GM12878 (cell line): ENCODE measurements at regions of chr4 and their contacts with region 1.

Region 1: GRCh38 chr4:22444813-22445212 is 71.1 kb downstream of the ADGRA3 start:
- DNase-seq: no peak
- ATAC-seq: no peak; the same call in 1 of the 3 replicates
- H3K4me3 ChIP-seq: no peak overlapping the region
- H3K27ac ChIP-seq: no peak overlapping the region
- H3K4me1 ChIP-seq: no peaks in the 10 kb centered on the region
- H3K27me3 ChIP-seq: no peaks in the 10 kb centered on the region
- CTCF ChIP-seq: no peak
- EP300 ChIP-seq: no peak
- POLR2A ChIP-seq: no peak
- RAD21 ChIP-seq: no peak

Region 2: DNA sequence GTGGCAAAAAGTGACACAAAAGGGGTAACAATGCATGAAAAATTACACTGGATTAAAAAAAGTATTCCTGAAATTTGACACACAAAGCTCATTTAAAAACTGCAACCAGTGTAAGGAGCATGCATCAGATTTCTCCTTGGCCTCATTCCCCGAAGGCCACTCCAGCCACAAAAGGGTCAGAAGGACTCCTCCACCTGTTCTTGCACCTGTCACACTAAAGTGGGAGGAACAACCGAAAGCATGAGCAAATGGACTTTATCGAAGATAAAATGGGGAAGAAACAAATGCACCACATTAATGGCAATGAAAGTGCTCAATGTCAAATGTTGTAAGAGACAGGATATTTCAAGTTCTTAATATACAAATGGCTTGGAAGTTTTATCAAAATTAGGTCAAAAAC is 17.1 kb before region 1 on chr4:
- CTCF ChIA-PET with region 1: interaction called, 5 read pairs
- POLR2A ChIA-PET with region 1: interaction called, 4 read pairs
- RAD21 ChIA-PET with region 1: interaction called, 4 read pairs
- SMC1A ChIA-PET with region 1: interaction called, 32 read pairs
- in situ Hi-C with region 1: no loop called
- intact Hi-C with region 1: no loop called
- DNase-seq: no peak
- ATAC-seq: peak; percentile 55; the same call in 2 of the 3 replicates
- H3K4me3 ChIP-seq: no peak overlapping the region
- H3K27ac ChIP-seq: no peak overlapping the region
- H3K4me1 ChIP-seq: no peaks in the 10 kb centered on the region
- H3K27me3 ChIP-seq: no peaks in the 10 kb centered on the region
- CTCF ChIP-seq: no peak
- EP300 ChIP-seq: no peak
- POLR2A ChIP-seq: no peak
- RAD21 ChIP-seq: no peak

Region 3: GRCh38 chr4:22454955-22455354 is 10.1 kb after region 1 on chr4:
- CTCF ChIA-PET with region 1: interaction called, 16 read pairs
- POLR2A ChIA-PET with region 1: interaction called, 5 read pairs
- RAD21 ChIA-PET with region 1: interaction called, 18 read pairs
- SMC1A ChIA-PET with region 1: interaction called, 19 read pairs
- in situ Hi-C with region 1: no loop called
- intact Hi-C with region 1: no loop called
- DNase-seq: no peak
- ATAC-seq: peak; percentile 85
- H3K4me3 ChIP-seq: no peak overlapping the region
- H3K27ac ChIP-seq: no peak overlapping the region
- H3K4me1 ChIP-seq: no peaks in the 10 kb centered on the region
- H3K27me3 ChIP-seq: no peaks in the 10 kb centered on the region
- CTCF ChIP-seq: no peak
- EP300 ChIP-seq: no peak; a peak in 1 of 4 replicates
- POLR2A ChIP-seq: no peak
- RAD21 ChIP-seq: no peak

Region 4: DNA sequence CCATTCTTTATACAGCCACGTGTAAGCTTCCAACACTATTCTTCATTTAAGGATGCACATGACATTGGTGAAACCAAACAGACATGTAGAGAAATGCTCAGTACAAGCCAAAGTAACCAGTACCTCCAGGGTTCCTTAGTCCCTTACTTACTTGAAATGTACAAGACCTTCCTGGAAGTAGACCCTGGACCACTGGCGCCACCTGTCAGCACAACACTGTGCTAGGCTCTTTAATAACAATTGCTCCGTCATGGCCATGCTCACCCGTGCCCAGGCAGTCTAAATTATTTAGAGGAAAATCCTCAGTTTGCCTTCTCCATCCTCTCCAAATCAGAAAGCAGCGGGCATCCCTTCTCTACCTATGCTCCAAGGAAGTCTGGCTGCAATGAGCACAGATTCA is 18.4 kb after region 1 on chr4:
- CTCF ChIA-PET with region 1: interaction called, 10 read pairs
- POLR2A ChIA-PET with region 1: interaction called, 5 read pairs
- RAD21 ChIA-PET with region 1: interaction called, 4 read pairs
- SMC1A ChIA-PET with region 1: interaction called, 16 read pairs
- in situ Hi-C with region 1: no loop called
- intact Hi-C with region 1: no loop called
- DNase-seq: no peak
- ATAC-seq: peak; percentile 65
- H3K4me3 ChIP-seq: no peak overlapping the region
- H3K27ac ChIP-seq: no peak overlapping the region
- H3K4me1 ChIP-seq: no peaks in the 10 kb centered on the region
- H3K27me3 ChIP-seq: no peaks in the 10 kb centered on the region
- CTCF ChIP-seq: no peak
- EP300 ChIP-seq: no peak
- POLR2A ChIP-seq: no peak
- RAD21 ChIP-seq: no peak

Region 5: DNA sequence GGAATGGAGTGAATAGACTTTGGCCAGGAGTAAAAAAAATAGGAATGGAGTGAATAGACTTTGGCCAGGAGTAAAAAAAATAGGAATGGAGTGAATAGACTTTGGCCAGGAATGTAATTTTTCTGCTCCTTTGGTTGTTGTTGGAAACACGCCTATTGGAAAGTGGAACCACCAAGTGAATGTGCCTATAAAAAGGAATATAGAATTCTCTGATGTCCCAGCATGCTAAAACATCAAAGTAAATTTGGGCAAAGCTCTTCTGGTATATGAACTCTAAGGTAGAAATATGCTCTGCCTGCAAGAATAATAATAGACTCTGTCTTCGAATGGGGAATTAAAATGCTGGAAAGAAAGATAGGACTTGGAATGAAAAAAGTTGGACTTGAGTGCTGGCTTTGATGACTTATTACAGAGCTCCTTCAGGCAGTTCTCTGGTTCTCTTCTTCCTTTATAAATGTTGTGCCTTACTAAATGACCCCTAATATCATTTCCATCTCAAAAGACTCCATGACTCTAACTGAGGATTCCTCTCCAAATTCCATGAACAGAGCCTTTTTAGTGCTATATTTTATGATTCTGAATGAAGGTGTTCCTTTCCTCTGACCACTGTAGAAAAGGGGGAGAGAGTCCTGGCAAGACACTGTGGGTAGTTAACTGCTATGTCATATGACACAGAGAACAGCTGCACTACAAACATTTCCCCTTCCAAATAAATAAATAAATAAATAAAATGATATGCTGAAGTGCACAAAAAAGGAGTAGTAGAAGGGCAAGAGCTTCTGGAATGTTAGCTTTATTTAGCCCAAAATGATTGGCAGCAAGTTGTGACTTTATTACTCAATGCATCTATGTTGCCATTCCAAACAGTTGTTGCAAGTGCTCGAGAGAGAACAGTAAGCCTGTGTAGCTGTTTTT is 234.4 kb after region 1 on chr4:
- CTCF ChIA-PET with region 1: interaction called, 4 read pairs
- POLR2A ChIA-PET with region 1: no interaction called
- RAD21 ChIA-PET with region 1: no interaction called
- SMC1A ChIA-PET with region 1: interaction called, 10 read pairs
- in situ Hi-C with region 1: no loop called
- intact Hi-C with region 1: no loop called
- DNase-seq: no peak
- ATAC-seq: no peak
- H3K4me3 ChIP-seq: no peak overlapping the region
- H3K27ac ChIP-seq: no peak overlapping the region
- H3K4me1 ChIP-seq: no peaks in the 10 kb centered on the region
- H3K27me3 ChIP-seq: no peaks in the 10 kb centered on the region
- CTCF ChIP-seq: no peak
- EP300 ChIP-seq: no peak
- POLR2A ChIP-seq: no peak
- RAD21 ChIP-seq: no peak